A673 (cell line): ENCODE measurements at regions of chr18 and their contacts with region 1.

Region 1: DNA sequence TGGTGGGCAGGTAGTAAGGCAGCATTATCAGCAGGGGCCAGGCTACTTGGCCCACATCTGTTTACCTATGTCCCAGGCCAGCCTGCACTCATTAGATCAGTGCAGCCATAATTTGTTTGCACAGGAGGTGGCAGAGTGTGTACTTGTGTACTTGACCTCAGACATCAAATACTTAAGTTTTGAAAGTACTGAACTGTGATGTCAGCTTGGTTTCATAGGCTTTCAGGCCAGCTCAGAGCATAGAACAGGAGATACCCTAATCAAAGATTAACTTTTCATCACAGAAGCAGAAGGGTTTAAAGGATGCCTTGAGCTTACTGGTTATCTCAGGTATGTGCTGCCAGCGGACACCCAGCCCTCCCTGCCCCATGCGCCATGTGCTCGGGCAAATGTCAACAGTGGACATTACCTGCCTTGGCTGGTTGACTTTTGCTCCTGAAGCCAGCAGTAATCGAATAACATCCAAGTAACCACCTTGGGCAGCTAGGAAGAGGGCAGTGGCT is 33.2 kb downstream of the ANKRD29 start:
- DNase-seq: no peak
- H3K4me3 ChIP-seq: no peak overlapping the region
- H3K27ac ChIP-seq: no peak overlapping the region
- H3K4me1 ChIP-seq: no peaks in the 10 kb centered on the region
- H3K27me3 ChIP-seq: no peaks in the 10 kb centered on the region
- CTCF ChIP-seq: no peak

Region 2: GRCh38 chr18:23640023-23640422 is 10.5 kb after region 1 on chr18:
- CTCF ChIA-PET with region 1: interaction called, 11 read pairs
- POLR2A ChIA-PET with region 1: no interaction called
- intact Hi-C with region 1: no loop called
- DNase-seq: no peak
- H3K4me3 ChIP-seq: no peak overlapping the region
- H3K27ac ChIP-seq: no peak overlapping the region
- H3K4me1 ChIP-seq: no peaks in the 10 kb centered on the region
- H3K27me3 ChIP-seq: no peaks in the 10 kb centered on the region
- CTCF ChIP-seq: no peak

Region 3: DNA sequence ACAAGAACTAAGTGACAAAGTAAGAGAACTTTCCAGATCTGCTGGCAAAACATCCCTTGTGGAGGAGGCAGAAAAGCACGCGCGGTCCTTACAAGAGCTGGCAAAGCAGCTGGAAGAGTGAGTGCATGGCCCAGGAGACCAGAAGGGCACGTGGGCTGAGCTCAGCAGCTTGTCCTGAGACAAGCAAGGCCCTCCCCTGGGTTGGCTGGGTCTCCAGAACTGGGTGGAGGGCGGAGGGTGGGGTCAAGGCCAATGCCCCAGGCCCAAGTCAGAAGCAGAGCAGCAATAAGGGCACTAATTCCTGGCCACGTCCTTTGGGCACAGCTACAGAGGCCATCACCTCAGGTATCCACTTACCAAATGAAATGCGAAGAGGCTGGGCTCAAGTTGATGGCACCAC is 274.5 kb after region 1 on chr18:
- CTCF ChIA-PET with region 1: no interaction called
- POLR2A ChIA-PET with region 1: no interaction called
- intact Hi-C with region 1: no loop called
- DNase-seq: no peak
- H3K4me3 ChIP-seq: no peak overlapping the region
- H3K27ac ChIP-seq: no peak overlapping the region
- H3K4me1 ChIP-seq: no peaks in the 10 kb centered on the region
- H3K27me3 ChIP-seq: no peaks in the 10 kb centered on the region
- CTCF ChIP-seq: no peak